ENCODE measurements at regions of chr6 and their contacts with region 1.

Region 1: DNA sequence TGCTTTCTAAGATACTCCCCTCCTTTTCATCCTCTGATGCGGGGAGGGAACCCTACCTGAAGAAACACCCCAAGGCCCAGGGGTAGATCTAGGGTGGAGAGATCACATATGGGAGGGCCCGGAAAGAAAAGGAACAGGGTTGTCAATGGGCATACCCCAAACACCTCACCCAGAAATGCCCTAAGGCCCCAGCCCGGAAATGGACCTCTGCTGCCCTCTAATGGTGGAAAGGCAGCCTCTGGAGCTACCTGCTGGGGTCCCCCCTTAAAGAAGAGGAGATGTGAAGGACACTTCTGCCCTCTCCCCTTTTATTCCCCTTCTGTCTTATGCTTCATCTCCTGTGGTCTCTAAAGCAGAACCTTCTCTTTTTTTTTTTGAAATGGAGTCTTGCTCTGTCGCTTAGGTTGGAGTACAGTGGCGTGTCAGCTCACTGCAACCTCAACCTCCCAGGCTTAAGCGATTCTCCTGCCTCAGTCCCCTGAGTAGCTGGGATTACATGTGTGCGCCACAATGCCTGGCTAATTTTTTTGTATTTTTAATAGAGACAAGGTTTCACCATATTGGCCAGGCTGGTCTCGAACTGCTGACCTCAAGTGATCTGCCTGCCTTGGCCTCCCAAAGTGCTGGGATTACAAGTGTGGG is 458 bp upstream of the ARMC12 start:
- DNase-seq: peak; percentile 39 to 65
- ATAC-seq: peak; percentile 47 to 71; a peak in 4 of 6 replicates
- H3K4me3 ChIP-seq: no peak overlapping the region
- H3K27ac ChIP-seq: peak overlapping the region in 1 of 2 experiments; percentile 99; a peak in 1 of 6 replicates
- H3K4me1 ChIP-seq: peaks cover 12% of the 10 kb centered on the region
- CTCF ChIP-seq: peak; percentile 79
- EP300 ChIP-seq: no peak
- POLR2A ChIP-seq: no peak
- RAD21 ChIP-seq: peak; percentile 84 to 91

Region 2: DNA sequence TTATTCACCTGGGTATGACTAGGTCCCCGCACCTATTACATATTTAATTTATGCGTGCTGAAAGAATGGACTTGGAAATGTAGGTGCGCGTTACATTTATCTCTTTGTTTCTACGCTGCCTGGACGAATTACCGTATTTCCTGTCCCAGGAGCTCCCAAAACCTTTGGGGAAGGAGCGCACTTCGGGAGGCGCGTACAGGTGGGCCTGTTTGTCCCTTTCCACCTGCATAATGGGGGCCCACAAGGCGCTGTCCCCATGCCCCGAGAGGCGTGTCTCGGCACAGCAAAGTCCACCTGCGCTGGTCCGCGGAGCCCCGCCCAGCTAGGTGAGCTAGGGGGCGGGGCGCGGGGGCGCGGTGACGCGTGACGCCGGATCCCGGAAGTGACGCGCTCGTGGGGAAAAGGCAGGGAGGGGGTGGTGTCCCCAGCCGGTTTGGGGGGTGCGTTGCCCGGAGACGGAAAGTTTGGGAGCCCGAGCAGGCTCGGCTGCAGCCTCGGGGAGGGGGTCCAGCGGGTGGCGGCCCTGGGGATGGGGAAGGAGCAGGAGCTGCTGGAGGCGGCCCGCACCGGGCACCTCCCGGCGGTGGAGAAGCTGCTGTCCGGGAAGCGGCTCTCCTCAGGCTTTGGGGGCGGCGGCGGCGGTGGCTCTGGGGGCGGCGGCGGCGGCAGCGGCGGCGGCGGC is 847.4 kb before region 1 on chr6 and contains the start of gene ANKS1A:
- CTCF ChIA-PET with region 1: no interaction called
- POLR2A ChIA-PET with region 1: no interaction called
- DNase-seq: peak; percentile 60 to 64
- ATAC-seq: peak; percentile 77 to 87
- H3K4me3 ChIP-seq: peak within 1 kb of the TSS; percentile 71
- H3K27ac ChIP-seq: peak within 1 kb of the TSS; percentile 73 to 92
- H3K4me1 ChIP-seq: peaks cover 16% of the 10 kb centered on the region; the same call in 1 of the 3 replicates
- CTCF ChIP-seq: no peak
- EP300 ChIP-seq: no peak
- POLR2A ChIP-seq: peak; percentile 43; the same call in 1 of the 2 replicates
- RAD21 ChIP-seq: no peak
- polyA plus RNA-seq, gene ANKS1A: 3.6 and 6.0 TPM in 2 replicates

Region 3: DNA sequence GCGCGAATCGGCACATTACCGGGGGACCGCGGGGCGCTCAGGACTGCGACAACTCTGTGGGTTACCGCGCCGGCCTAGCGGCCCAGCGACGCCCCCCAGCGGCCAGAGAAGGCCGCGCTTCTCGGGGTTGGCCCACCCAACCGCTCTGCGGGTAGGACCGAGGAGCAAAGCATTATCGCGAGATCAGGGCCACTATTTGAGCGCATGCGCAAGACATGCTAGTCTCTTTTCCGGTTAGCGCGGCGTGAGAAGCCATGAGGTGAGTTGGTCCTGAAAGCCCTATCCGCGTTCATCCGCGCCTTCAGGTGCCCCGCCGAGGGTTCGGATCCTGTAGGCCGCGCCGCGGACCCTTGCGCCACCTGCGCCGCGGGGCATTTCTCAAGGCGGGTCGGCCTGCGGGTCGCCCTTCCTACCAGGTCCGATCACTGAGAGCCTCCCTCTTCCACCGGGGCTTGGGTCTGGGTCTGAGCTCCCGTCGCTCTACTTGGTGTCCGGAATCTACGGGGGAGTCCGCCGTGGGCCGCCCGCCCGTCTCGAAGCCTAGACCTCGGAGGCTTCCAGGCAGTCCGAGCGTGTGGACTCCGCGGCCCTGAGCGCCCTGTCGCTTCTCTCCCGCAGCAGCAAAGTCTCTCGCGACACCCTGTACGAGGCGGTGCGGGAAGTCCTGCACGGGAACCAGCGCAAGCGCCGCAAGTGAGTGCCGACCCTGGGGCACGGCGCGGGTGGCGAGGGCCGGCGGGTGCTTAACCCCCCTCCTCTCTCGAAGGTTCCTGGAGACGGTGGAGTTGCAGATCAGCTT is 268.0 kb before region 1 on chr6 and contains the start of gene RPL10A:
- CTCF ChIA-PET with region 1: interaction called, 12 read pairs
- POLR2A ChIA-PET with region 1: no interaction called
- DNase-seq: peak; percentile 73 to 95
- ATAC-seq: peak; percentile 86 to 90
- H3K4me3 ChIP-seq: peak within 1 kb of the TSS; percentile 99
- H3K27ac ChIP-seq: peak within 1 kb of the TSS; percentile 97 to 98
- H3K4me1 ChIP-seq: peaks cover 33% of the 10 kb centered on the region
- CTCF ChIP-seq: peak; percentile 81
- EP300 ChIP-seq: no peak
- POLR2A ChIP-seq: peak; percentile 99
- RAD21 ChIP-seq: peak; percentile 56 to 72
- polyA plus RNA-seq, gene RPL10A: 1,645 and 1,707 TPM in 2 replicates

Region 4: GRCh38 chr6:35569011-35569461 is 167.3 kb before region 1 on chr6:
- CTCF ChIA-PET with region 1: interaction called, 46 read pairs
- POLR2A ChIA-PET with region 1: no interaction called
- DNase-seq: peak in 1 of 2 experiments; percentile 12
- ATAC-seq: peak; percentile 76 to 88
- H3K4me3 ChIP-seq: no peak overlapping the region
- H3K27ac ChIP-seq: no peak overlapping the region
- H3K4me1 ChIP-seq: no peaks in the 10 kb centered on the region
- CTCF ChIP-seq: no peak
- EP300 ChIP-seq: no peak
- POLR2A ChIP-seq: no peak
- RAD21 ChIP-seq: peak in 1 of 2 experiments; percentile 12; a peak in 1 of 5 replicates

Region 5: GRCh38 chr6:35596448-35597442 is 139.6 kb before region 1 on chr6:
- CTCF ChIA-PET with region 1: interaction called, 102 read pairs
- POLR2A ChIA-PET with region 1: no interaction called
- DNase-seq: peak in 1 of 2 experiments; percentile 35
- ATAC-seq: peak in 1 of 2 experiments; percentile 48; a peak in 3 of 6 replicates
- H3K4me3 ChIP-seq: no peak overlapping the region
- H3K27ac ChIP-seq: peak overlapping the region; percentile 51 to 59; a peak in 5 of 6 replicates
- H3K4me1 ChIP-seq: peaks cover 33% of the 10 kb centered on the region
- CTCF ChIP-seq: no peak
- EP300 ChIP-seq: no peak
- POLR2A ChIP-seq: no peak
- RAD21 ChIP-seq: no peak

Region 6: DNA sequence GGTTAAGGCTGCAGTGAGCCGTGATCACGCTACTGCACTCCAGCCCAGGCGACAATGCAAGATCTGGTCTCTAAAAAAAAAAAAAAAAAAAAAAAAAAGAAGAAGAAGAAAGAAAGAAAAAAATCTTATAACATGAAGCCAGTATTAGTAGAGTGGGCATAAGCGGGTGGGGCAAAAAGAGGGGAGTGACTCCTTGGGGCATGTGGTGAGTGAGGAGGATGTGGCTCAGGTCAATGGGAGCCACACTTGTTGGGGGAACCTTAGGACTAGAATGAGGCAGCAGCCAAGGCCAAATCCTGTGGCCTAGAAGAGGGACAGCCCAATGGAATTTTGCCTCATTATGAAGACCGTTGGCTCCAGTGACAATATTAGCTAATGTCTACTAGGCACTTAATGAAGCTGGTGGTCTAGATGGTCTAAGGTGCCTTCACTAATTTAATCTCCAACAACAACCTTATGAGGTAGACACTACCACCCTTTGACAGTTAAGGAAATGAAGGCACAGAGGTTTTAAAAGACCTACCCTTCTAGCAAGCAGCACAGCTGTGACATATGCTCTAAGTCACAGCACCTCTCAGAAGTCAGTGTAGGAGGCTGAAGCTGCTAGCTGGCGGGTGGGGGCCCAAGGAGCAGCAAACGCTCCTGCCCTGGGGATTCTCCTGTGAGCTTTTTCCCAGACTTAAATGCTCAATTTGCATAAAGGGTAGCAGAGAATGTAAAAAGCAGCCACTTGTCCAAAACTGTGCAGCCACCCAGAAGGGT is 23.2 kb before region 1 on chr6:
- CTCF ChIA-PET with region 1: interaction called, 10 read pairs
- POLR2A ChIA-PET with region 1: no interaction called
- DNase-seq: no peak
- ATAC-seq: no peak
- H3K4me3 ChIP-seq: no peak overlapping the region
- H3K27ac ChIP-seq: no peak overlapping the region; a peak in 1 of 6 replicates
- H3K4me1 ChIP-seq: no peaks in the 10 kb centered on the region
- CTCF ChIP-seq: no peak
- EP300 ChIP-seq: no peak
- POLR2A ChIP-seq: no peak
- RAD21 ChIP-seq: no peak